ENCODE measurements at regions of chr19 and their contacts with region 1.

Region 1: DNA sequence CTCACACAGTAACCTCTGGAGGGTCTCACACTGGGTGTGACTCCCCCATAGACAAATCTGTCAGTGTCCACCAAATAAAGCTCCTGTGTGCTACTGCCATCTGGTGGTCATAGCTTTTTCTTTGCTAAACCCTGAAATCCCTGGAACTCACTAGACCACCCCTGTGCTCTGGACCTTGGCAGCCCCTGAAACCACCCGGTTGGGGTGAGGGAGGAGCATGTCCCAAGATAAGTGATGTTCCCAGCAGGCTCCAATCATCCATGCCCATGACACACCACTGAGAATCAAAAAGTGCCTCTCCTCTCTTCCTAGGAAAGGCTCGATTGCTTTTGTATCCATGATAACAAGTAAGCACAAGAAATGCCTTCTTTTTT is 6.5 kb upstream of the HSD17B14 start:
- DNase-seq: peak; percentile 62
- H3K4me3 ChIP-seq: no peak overlapping the region
- H3K27ac ChIP-seq: no peak overlapping the region
- H3K4me1 ChIP-seq: no peaks in the 10 kb centered on the region
- H3K27me3 ChIP-seq: no peaks in the 10 kb centered on the region
- CTCF ChIP-seq: peak; percentile 73 to 79
- POLR2A ChIP-seq: no peak

Region 2: GRCh38 chr19:48543121-48544056 is 299.4 kb before region 1 on chr19:
- CTCF ChIA-PET with region 1: no interaction called
- POLR2A ChIA-PET with region 1: no interaction called
- dilution Hi-C with region 1: no loop called
- intact Hi-C with region 1: no loop called
- DNase-seq: peak; percentile 80
- H3K4me3 ChIP-seq: no peak overlapping the region
- H3K27ac ChIP-seq: no peak overlapping the region
- H3K4me1 ChIP-seq: peaks cover 5% of the 10 kb centered on the region
- H3K27me3 ChIP-seq: no peaks in the 10 kb centered on the region
- CTCF ChIP-seq: no peak
- POLR2A ChIP-seq: no peak

Region 3: DNA sequence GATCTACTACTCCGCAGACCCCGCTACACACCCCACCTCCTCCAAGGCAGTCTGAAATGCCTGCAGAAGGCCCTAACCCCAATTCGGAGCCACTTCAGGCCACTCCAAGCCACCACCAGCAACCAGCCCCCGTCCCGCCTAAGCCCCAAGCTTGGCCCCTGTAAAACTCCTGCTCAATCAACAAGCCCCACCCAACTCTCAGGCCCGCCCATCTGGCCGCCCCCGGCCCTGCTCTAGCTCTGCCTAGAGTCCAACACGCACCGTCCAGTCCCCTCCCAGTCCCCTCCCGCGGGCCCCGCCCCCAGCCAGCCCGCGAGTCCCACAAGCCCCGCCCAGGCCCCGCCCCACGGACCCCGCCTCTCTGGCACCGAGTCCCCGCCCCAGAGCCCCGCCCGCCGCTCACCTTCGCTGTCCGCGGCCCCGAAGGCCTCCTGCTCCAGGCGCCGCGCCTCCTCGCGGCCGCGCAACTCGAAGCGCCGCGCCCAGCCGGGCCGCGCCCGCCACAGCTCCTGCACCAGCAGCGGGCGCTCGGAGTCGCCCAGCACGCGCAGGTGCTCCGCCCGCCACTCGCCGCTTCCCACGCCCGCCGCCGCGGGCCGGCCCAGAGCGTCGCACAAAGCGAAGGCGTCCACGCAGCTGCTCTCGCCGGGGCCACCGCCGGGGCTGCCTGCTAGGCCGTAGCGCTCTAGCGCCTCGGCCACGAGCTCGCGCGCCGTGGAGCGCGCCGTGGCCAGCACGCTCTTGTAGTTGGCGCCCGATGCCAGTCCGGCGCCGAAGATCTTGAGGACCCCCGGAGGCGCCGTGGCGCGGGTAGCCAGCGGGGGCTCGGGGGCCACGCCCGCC is 104.0 kb before region 1 on chr19:
- CTCF ChIA-PET with region 1: interaction called, 10 read pairs
- POLR2A ChIA-PET with region 1: no interaction called
- dilution Hi-C with region 1: no loop called
- intact Hi-C with region 1: loop called (anchors 5 kb)
- DNase-seq: peak; percentile 94
- H3K4me3 ChIP-seq: peak overlapping the region; percentile 73 to 80 (median 77)
- H3K27ac ChIP-seq: peak overlapping the region; percentile 8
- H3K4me1 ChIP-seq: peaks cover 24% of the 10 kb centered on the region
- H3K27me3 ChIP-seq: no peaks in the 10 kb centered on the region
- CTCF ChIP-seq: peak; percentile 29 to 30
- POLR2A ChIP-seq: no peak

Region 4: GRCh38 chr19:48795055-48795684 is 47.6 kb before region 1 on chr19:
- CTCF ChIA-PET with region 1: interaction called, 427 read pairs
- POLR2A ChIA-PET with region 1: no interaction called
- dilution Hi-C with region 1: no loop called
- intact Hi-C with region 1: loop called (anchors 1 kb)
- DNase-seq: peak; percentile 95
- H3K4me3 ChIP-seq: peak overlapping the region in 2 of 3 experiments; percentile 18 to 37
- H3K27ac ChIP-seq: peak overlapping the region; percentile 2
- H3K4me1 ChIP-seq: peaks cover 3% of the 10 kb centered on the region
- H3K27me3 ChIP-seq: no peaks in the 10 kb centered on the region
- CTCF ChIP-seq: peak; percentile 94 to 96
- POLR2A ChIP-seq: peak; percentile 48

Region 5: GRCh38 chr19:48826606-48827020 is 16.2 kb before region 1 on chr19:
- CTCF ChIA-PET with region 1: interaction called, 19 read pairs
- POLR2A ChIA-PET with region 1: no interaction called
- dilution Hi-C with region 1: no loop called
- intact Hi-C with region 1: no loop called
- DNase-seq: no peak
- H3K4me3 ChIP-seq: no peak overlapping the region
- H3K27ac ChIP-seq: no peak overlapping the region
- H3K4me1 ChIP-seq: no peaks in the 10 kb centered on the region
- H3K27me3 ChIP-seq: no peaks in the 10 kb centered on the region
- CTCF ChIP-seq: no peak
- POLR2A ChIP-seq: no peak

Region 6: DNA sequence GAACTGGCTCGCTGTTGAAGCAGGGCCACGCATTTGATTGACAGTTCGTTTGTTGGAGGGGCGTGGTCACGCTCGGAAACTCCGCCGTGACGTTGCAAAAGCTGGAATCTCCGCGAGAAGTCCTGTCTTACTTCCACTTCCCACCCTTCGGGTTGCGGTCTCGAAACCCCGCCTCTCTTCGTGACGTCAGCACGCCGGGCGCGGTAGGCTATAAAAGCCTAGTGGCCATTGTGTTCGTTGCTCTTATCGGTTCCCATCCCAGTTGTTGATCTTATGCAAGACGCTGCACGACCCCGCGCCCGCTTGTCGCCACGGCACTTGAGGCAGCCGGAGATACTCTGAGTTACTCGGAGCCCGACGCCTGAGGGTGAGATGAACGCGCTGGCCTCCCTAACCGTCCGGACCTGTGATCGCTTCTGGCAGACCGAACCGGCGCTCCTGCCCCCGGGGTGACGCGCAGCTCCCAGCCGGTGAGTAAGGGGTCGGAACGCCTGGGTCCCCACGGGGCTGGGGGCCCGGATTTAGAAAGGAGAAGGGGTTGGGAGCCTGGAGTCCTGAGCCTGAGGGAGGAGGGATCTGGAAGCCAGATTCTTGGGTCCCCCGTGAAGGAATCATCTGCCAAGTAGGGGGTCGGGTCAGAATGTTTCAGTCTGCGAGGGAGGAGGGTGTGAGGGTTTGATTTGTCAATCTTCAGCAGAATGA is 29.6 kb after region 1 on chr19 and contains the start of gene PPP1R15A:
- CTCF ChIA-PET with region 1: interaction called, 12 read pairs
- POLR2A ChIA-PET with region 1: interaction called, 9 read pairs
- dilution Hi-C with region 1: no loop called
- intact Hi-C with region 1: loop called (anchors 1 kb)
- DNase-seq: peak; percentile 100
- H3K4me3 ChIP-seq: peak within 1 kb of the TSS; percentile 93 to 100 (median 100)
- H3K27ac ChIP-seq: peak within 1 kb of the TSS; percentile 100
- H3K4me1 ChIP-seq: peaks cover 29% of the 10 kb centered on the region
- H3K27me3 ChIP-seq: no peaks in the 10 kb centered on the region
- CTCF ChIP-seq: no peak
- POLR2A ChIP-seq: peak; percentile 100
- total RNA-seq, gene PPP1R15A: 67.4 and 73.4 TPM in 2 replicates

Region 7: GRCh38 chr19:48943081-48943480 is 100.3 kb after region 1 on chr19:
- CTCF ChIA-PET with region 1: no interaction called
- POLR2A ChIA-PET with region 1: no interaction called
- dilution Hi-C with region 1: no loop called
- intact Hi-C with region 1: no loop called
- DNase-seq: no peak
- H3K4me3 ChIP-seq: no peak overlapping the region
- H3K27ac ChIP-seq: no peak overlapping the region
- H3K4me1 ChIP-seq: no peaks in the 10 kb centered on the region
- H3K27me3 ChIP-seq: no peaks in the 10 kb centered on the region
- CTCF ChIP-seq: no peak
- POLR2A ChIP-seq: no peak

Region 8: GRCh38 chr19:48965040-48965805 is 122.4 kb after region 1 on chr19 and contains the start of gene FTL:
- CTCF ChIA-PET with region 1: interaction called, 79 read pairs
- POLR2A ChIA-PET with region 1: no interaction called
- dilution Hi-C with region 1: no loop called
- intact Hi-C with region 1: no loop called
- DNase-seq: peak; percentile 96
- H3K4me3 ChIP-seq: peak within 1 kb of the TSS; percentile 35 to 79 (median 60)
- H3K27ac ChIP-seq: peak within 1 kb of the TSS; percentile 97
- H3K4me1 ChIP-seq: peaks cover 25% of the 10 kb centered on the region
- H3K27me3 ChIP-seq: no peaks in the 10 kb centered on the region
- CTCF ChIP-seq: no peak
- POLR2A ChIP-seq: peak; percentile 100
- total RNA-seq, gene FTL: 1,636 and 1,937 TPM in 2 replicates

Region 9: GRCh38 chr19:49403404-49404187 is 560.8 kb after region 1 on chr19:
- CTCF ChIA-PET with region 1: no interaction called
- POLR2A ChIA-PET with region 1: no interaction called
- dilution Hi-C with region 1: no loop called
- intact Hi-C with region 1: no loop called
- DNase-seq: no peak
- H3K4me3 ChIP-seq: no peak overlapping the region
- H3K27ac ChIP-seq: no peak overlapping the region
- H3K4me1 ChIP-seq: no peaks in the 10 kb centered on the region
- H3K27me3 ChIP-seq: no peaks in the 10 kb centered on the region
- CTCF ChIP-seq: no peak
- POLR2A ChIP-seq: no peak